HepG2 (cell line): ENCODE measurements at regions of chr14 and their contacts with region 1.

Region 1: DNA sequence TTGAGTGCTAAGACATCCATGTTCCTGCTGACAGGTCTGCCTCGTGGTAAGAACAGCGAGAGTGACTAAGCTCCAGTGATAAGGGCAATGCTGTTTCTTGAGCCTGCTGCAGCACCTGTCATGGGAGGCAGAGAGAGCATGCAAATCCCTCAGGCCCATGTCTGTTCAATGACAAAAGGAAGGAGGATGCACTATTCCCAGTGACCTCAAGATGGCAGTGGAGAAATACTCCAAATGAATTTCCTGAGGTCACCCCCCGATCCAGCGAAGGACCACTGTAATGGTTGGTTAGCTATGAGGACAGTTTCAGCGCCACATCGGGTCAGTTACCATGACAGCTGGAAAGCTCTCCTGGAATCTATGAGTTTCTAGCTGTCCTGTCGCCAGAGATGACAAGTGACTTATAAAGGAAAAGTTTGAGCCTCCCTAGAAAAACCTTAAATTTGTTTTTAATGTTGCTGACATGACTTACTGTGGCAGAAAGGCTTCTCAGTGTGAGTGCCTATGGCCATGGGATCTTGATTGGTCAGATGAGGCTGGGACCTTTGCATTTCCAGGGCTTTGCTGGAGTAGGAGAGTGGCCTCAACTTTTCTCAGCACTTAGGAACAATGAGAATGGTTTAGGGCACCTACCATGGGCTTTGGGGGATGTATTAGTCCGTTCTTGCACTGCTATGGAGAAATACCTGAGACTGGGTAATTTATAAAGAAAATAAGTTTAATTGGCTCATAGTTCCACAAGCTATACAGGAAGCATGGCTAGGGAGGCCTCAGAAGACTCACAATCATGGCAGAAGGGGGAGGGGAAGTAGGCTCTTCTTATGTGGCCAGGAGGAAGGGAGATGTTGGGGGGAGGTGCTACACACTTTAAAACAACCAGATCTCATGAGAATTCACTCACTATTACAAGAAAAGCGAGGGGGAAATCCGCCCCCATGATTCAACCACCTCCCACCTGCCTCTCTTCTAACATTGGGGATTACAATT is 88.0 kb upstream of the TMEM260 start:
- DNase-seq: peak; percentile 49
- ATAC-seq: peak; percentile 83
- H3K4me3 ChIP-seq: no peak overlapping the region
- H3K27ac ChIP-seq: no peak overlapping the region
- H3K4me1 ChIP-seq: no peaks in the 10 kb centered on the region
- H3K27me3 ChIP-seq: no peaks in the 10 kb centered on the region; a peak in 1 of 5 replicates
- CTCF ChIP-seq: peak; percentile 80
- EP300 ChIP-seq: no peak
- POLR2A ChIP-seq: no peak
- RAD21 ChIP-seq: no peak

Region 2: GRCh38 chr14:56874375-56874774 is 382.8 kb after region 1 on chr14:
- CTCF ChIA-PET with region 1: no interaction called
- POLR2A ChIA-PET with region 1: no interaction called
- in situ Hi-C with region 1: no loop called
- intact Hi-C with region 1: loop called (anchors 5 kb)
- DNase-seq: peak; percentile 18
- ATAC-seq: peak; percentile 81
- H3K4me3 ChIP-seq: no peak overlapping the region
- H3K27ac ChIP-seq: no peak overlapping the region
- H3K4me1 ChIP-seq: no peaks in the 10 kb centered on the region
- H3K27me3 ChIP-seq: peaks cover 0 to 7% of the 10 kb centered on the region in 2 experiments; a peak in 2 of 5 replicates
- CTCF ChIP-seq: peak; percentile 61
- EP300 ChIP-seq: no peak
- POLR2A ChIP-seq: no peak
- RAD21 ChIP-seq: no peak

Region 3: GRCh38 chr14:56902385-56902784 is 410.8 kb after region 1 on chr14:
- CTCF ChIA-PET with region 1: no interaction called
- POLR2A ChIA-PET with region 1: no interaction called
- in situ Hi-C with region 1: no loop called
- intact Hi-C with region 1: no loop called
- DNase-seq: no peak
- ATAC-seq: no peak
- H3K4me3 ChIP-seq: no peak overlapping the region
- H3K27ac ChIP-seq: no peak overlapping the region
- H3K4me1 ChIP-seq: no peaks in the 10 kb centered on the region
- H3K27me3 ChIP-seq: no peaks in the 10 kb centered on the region; a peak in 1 of 5 replicates
- CTCF ChIP-seq: no peak
- EP300 ChIP-seq: no peak
- POLR2A ChIP-seq: no peak
- RAD21 ChIP-seq: no peak

Region 4: GRCh38 chr14:57182760-57183503 is 691.3 kb after region 1 on chr14:
- CTCF ChIA-PET with region 1: no interaction called
- POLR2A ChIA-PET with region 1: no interaction called
- in situ Hi-C with region 1: loop called (anchors 5 kb)
- intact Hi-C with region 1: loop called (anchors 1 kb)
- DNase-seq: peak; percentile 15
- ATAC-seq: peak; percentile 68
- H3K4me3 ChIP-seq: no peak overlapping the region
- H3K27ac ChIP-seq: no peak overlapping the region
- H3K4me1 ChIP-seq: no peaks in the 10 kb centered on the region
- H3K27me3 ChIP-seq: peaks cover 0 to 5% of the 10 kb centered on the region in 2 experiments; a peak in 2 of 5 replicates
- CTCF ChIP-seq: peak; percentile 66
- EP300 ChIP-seq: no peak
- POLR2A ChIP-seq: no peak
- RAD21 ChIP-seq: 0 out of 2 replicates have a peak, but pooled peaks have one; percentile 38

Region 5: GRCh38 chr14:57189070-57189469 is 697.5 kb after region 1 on chr14:
- CTCF ChIA-PET with region 1: no interaction called
- POLR2A ChIA-PET with region 1: no interaction called
- in situ Hi-C with region 1: loop called (anchors 5 kb)
- intact Hi-C with region 1: no loop called
- DNase-seq: peak; percentile 3
- ATAC-seq: peak; percentile 46; the same call in 1 of the 3 replicates
- H3K4me3 ChIP-seq: no peak overlapping the region
- H3K27ac ChIP-seq: no peak overlapping the region
- H3K4me1 ChIP-seq: no peaks in the 10 kb centered on the region
- H3K27me3 ChIP-seq: peaks cover 0 to 10% of the 10 kb centered on the region in 2 experiments; a peak in 2 of 5 replicates
- CTCF ChIP-seq: peak; percentile 35
- EP300 ChIP-seq: no peak
- POLR2A ChIP-seq: no peak
- RAD21 ChIP-seq: no peak

Region 6: GRCh38 chr14:57317316-57317715 is 825.7 kb after region 1 on chr14:
- CTCF ChIA-PET with region 1: interaction called, 14 read pairs
- POLR2A ChIA-PET with region 1: no interaction called
- in situ Hi-C with region 1: loop called (anchors 5 kb)
- intact Hi-C with region 1: loop called (anchors 1 kb)
- DNase-seq: peak; percentile 76
- ATAC-seq: peak; percentile 74; the same call in 2 of the 3 replicates
- H3K4me3 ChIP-seq: no peak overlapping the region
- H3K27ac ChIP-seq: no peak overlapping the region
- H3K4me1 ChIP-seq: no peaks in the 10 kb centered on the region
- H3K27me3 ChIP-seq: peaks cover 3 to 13% of the 10 kb centered on the region in 2 experiments; a peak in 2 of 5 replicates
- CTCF ChIP-seq: peak; percentile 80
- EP300 ChIP-seq: no peak
- POLR2A ChIP-seq: no peak
- RAD21 ChIP-seq: 0 out of 2 replicates have a peak, but pooled peaks have one; percentile 54